ENCODE measurements at regions of chr3 and their contacts with region 1.

Region 1: GRCh38 chr3:42539869-42540714 is 37.6 kb downstream of the VIPR1 start:
- DNase-seq: peak; percentile 32 to 80 (median 70)
- ATAC-seq: peak; percentile 64
- H3K4me3 ChIP-seq: no peak overlapping the region
- H3K4me3 Mint-ChIP-seq: no peak overlapping the region
- H3K27ac ChIP-seq: no peak overlapping the region
- H3K27ac Mint-ChIP-seq: no peak overlapping the region
- H3K4me1 ChIP-seq: peaks cover 20% of the 10 kb centered on the region
- H3K4me1 Mint-ChIP-seq: peaks cover 21% of the 10 kb centered on the region
- H3K27me3 ChIP-seq: no peaks in the 10 kb centered on the region
- H3K27me3 Mint-ChIP-seq: no peaks in the 10 kb centered on the region
- CTCF ChIP-seq: peak; percentile 67

Region 2: DNA sequence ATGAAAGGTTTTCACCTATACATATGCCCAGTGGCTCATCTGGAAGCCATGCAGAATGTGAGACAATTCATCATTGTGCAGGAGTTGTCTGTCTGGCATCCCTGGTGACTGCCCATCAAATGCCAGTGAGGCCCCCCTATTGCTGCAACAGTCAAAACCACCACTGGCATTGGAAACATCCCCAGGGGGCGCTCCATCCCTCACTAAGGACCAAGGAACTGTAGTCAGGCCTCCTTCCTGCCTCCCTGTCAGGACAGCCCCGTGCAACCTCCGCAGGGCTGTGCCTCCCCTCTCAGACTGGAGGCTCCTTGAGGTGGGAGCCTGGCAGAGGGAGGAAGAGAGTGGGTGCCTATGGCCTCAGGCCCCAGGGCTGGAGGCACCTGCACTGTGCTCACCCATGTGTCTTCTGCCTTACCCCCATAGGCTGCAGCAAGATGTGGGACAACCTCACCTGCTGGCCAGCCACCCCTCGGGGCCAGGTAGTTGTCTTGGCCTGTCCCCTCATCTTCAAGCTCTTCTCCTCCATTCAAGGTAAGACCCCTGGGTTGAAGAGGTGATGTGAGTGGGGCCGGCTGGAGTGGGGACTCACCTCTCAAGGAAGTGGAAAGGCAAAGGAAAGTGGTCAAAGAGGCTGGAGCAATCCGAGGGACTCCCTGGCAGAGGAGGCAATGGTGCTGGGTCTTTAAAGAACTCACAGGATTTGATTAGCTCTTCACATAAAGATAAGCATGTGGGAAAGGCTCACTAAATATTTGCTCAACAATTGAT is 21.1 kb before region 1 on chr3:
- CTCF ChIA-PET with region 1: interaction called, 556 read pairs
- POLR2A ChIA-PET with region 1: no interaction called
- intact Hi-C with region 1: loop called (anchors 1 to 2 kb)
- DNase-seq: peak; percentile 10 to 75 (median 48)
- ATAC-seq: peak; percentile 55
- H3K4me3 ChIP-seq: no peak overlapping the region
- H3K4me3 Mint-ChIP-seq: no peak overlapping the region
- H3K27ac ChIP-seq: no peak overlapping the region
- H3K27ac Mint-ChIP-seq: peak overlapping the region; percentile 76
- H3K4me1 ChIP-seq: peaks cover 29% of the 10 kb centered on the region
- H3K4me1 Mint-ChIP-seq: peaks cover 30% of the 10 kb centered on the region
- H3K27me3 ChIP-seq: no peaks in the 10 kb centered on the region
- H3K27me3 Mint-ChIP-seq: no peaks in the 10 kb centered on the region
- CTCF ChIP-seq: peak; percentile 34

Region 3: DNA sequence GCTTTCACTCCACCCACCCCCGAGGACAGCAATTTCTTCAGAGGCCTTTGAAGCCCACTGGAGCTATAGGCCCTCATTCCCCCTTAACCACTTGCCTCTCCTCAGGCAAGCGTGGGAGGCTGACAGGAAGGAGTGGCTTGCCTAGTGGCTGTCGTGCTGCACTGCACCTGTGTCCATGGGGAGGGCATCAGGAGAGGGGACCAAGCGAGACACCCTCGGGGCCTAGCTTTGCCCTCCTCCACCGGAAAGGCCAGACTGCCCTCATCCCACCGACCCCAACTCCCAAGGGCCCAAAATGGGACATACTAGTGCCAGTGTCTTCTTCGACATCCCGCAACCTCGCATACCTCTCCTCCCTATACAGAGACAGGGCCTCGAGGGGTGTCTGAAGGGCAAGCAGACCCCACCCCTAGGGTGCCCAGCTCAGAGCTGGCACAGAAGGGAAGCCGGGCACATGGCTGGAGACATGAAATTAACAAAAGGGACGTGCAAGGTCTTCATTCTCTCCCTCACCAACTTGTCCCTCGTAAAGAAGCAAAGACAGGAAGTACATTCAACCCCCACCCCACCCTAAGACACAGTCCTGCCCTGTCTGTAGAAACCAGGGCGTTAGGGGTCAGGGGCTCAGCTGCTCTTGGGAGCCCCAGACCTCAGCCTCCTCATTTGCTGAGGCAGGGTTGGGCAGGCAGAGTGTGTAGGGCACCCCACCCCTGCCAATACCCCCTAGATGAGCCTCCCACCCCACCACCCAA is 13.3 kb before region 1 on chr3:
- CTCF ChIA-PET with region 1: interaction called, 100 read pairs
- POLR2A ChIA-PET with region 1: interaction called, 4 read pairs
- intact Hi-C with region 1: loop called in 1 of 2 experiments (anchors 1 kb)
- DNase-seq: peak in 8 of 9 experiments; percentile 14 to 68 (median 47)
- ATAC-seq: peak; percentile 89
- H3K4me3 ChIP-seq: no peak overlapping the region
- H3K4me3 Mint-ChIP-seq: peak overlapping the region; percentile 60
- H3K27ac ChIP-seq: peak overlapping the region; percentile 2 to 57
- H3K27ac Mint-ChIP-seq: peak overlapping the region; percentile 94
- H3K4me1 ChIP-seq: peaks cover 62% of the 10 kb centered on the region
- H3K4me1 Mint-ChIP-seq: peaks cover 70% of the 10 kb centered on the region
- H3K27me3 ChIP-seq: no peaks in the 10 kb centered on the region
- H3K27me3 Mint-ChIP-seq: no peaks in the 10 kb centered on the region
- CTCF ChIP-seq: peak; percentile 36

Measured in CD8-positive, alpha-beta T cell (primary cell).